ENCODE measurements at regions of chr6 and their contacts with region 1.

Region 1: DNA sequence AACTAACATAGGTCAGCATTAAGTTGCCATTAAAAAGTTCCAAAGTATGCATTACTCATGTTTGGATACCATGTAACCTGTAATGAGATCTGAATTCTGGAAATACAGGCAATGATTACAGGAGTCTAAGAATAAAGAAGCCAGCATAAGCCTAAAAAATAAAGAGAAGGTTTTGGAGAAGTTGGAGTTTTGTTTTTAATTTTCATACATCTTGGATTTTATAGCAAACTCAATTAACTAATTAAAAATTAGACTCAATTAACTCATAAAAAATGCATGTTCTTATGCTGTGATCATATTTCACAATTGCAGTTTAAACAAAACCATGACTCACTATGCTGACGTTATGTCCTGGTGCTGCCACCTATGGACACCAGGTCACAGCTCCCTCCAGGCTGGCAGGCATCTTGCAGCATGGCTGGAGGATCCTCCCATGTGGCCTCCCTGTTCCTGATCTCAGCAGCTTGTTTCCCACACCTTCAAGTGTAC is 648.8 kb upstream of the AGPAT4 start:
- DNase-seq: peak; percentile 66
- ATAC-seq: peak; percentile 83
- H3K4me3 Mint-ChIP-seq: no peak overlapping the region
- H3K27ac Mint-ChIP-seq: no peak overlapping the region
- H3K4me1 Mint-ChIP-seq: no peaks in the 10 kb centered on the region
- H3K27me3 Mint-ChIP-seq: no peaks in the 10 kb centered on the region

Region 2: DNA sequence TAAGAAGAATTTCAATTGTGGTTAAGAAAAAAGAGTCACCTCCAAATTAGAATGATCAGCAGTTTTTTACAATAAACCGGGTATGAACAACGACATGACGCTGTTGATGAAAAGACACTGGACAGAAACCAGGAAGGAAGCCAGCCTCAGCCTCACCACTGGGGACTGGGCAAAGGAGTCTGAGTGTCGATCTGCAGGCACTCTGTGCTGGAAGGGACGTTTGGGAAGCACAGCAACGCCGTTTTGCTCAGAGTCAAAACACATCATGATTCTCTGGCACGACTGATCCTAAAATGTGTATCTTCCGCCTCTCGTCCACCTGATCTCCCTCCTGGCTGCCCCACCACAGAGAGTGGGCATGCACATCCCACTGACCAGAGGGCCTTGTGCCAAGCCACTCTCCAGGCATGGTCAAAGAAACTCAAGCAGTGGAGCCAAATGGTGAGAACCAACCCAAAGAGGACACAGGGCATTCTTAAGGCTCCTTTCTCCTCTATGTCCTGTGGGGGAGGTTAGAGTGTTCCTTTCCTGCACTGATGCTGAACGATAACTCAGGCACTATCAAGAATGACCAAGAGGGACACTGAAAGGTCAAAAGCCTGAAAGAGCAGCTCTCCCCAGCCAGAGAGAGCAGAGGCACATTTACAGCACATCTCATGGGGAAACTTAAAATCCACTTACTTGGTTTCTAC is 717.7 kb before region 1 on chr6:
- CTCF ChIA-PET with region 1: no interaction called
- POLR2A ChIA-PET with region 1: no interaction called
- intact Hi-C with region 1: no loop called
- DNase-seq: no peak
- ATAC-seq: no peak
- H3K4me3 Mint-ChIP-seq: no peak overlapping the region
- H3K27ac Mint-ChIP-seq: no peak overlapping the region
- H3K4me1 Mint-ChIP-seq: no peaks in the 10 kb centered on the region
- H3K27me3 Mint-ChIP-seq: no peaks in the 10 kb centered on the region

Region 3: GRCh38 chr6:161748535-161749416 is 173.9 kb before region 1 on chr6:
- CTCF ChIA-PET with region 1: no interaction called
- POLR2A ChIA-PET with region 1: no interaction called
- intact Hi-C with region 1: loop called in 1 of 2 experiments (anchors 2 kb)
- DNase-seq: peak; percentile 59
- ATAC-seq: no peak
- H3K4me3 Mint-ChIP-seq: no peak overlapping the region
- H3K27ac Mint-ChIP-seq: no peak overlapping the region
- H3K4me1 Mint-ChIP-seq: no peaks in the 10 kb centered on the region
- H3K27me3 Mint-ChIP-seq: no peaks in the 10 kb centered on the region

Region 4: GRCh38 chr6:163036160-163036645 is 1113.5 kb after region 1 on chr6:
- CTCF ChIA-PET with region 1: no interaction called
- POLR2A ChIA-PET with region 1: no interaction called
- intact Hi-C with region 1: no loop called
- DNase-seq: no peak
- ATAC-seq: no peak
- H3K4me3 Mint-ChIP-seq: no peak overlapping the region
- H3K27ac Mint-ChIP-seq: no peak overlapping the region
- H3K4me1 Mint-ChIP-seq: no peaks in the 10 kb centered on the region
- H3K27me3 Mint-ChIP-seq: no peaks in the 10 kb centered on the region